ENCODE measurements at regions of chr21 and their contacts with region 1.

Region 1: DNA sequence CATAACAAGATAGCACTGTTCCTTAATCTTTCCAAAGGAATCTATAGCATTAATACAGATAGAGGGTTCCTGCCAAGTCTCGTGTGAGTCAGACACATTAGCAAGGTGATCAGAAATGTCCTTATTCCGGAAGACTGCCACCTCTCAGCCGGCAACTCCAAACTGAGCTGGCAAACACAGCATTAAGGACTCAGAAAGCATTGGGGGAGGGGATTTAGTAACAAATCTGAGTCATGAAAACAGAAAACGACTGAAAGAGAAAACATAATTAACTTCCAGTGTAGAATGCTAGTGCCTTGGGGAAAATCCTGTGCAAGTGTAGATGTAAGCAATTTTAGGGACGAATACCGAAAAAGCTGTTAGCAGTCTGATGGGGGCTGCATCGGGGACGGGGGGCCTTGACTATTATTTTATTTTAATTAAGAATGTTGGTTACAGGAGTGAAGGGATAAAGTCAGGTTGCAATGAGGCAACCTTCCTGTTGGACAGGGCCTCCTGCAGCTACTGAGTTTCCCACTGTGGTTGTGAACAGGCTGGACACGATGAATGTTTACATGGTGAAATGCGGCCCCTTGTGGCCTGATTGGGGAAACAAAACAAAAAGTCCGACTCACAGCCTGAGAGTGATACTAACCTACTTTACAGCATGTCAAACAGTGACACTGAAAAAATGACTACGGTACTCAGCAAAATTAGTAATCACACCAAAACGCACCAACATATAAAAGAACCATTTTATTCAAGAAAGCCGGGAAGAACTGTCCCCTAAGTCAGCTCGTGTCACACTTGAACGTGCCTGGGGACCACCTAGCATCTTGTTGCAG is 20.7 kb downstream of the MIS18A start:
- DNase-seq: peak; percentile 15
- H3K4me3 Mint-ChIP-seq: no peak overlapping the region
- H3K27ac Mint-ChIP-seq: no peak overlapping the region
- H3K4me1 Mint-ChIP-seq: no peaks in the 10 kb centered on the region
- H3K27me3 Mint-ChIP-seq: peaks cover 7% of the 10 kb centered on the region

Region 2: DNA sequence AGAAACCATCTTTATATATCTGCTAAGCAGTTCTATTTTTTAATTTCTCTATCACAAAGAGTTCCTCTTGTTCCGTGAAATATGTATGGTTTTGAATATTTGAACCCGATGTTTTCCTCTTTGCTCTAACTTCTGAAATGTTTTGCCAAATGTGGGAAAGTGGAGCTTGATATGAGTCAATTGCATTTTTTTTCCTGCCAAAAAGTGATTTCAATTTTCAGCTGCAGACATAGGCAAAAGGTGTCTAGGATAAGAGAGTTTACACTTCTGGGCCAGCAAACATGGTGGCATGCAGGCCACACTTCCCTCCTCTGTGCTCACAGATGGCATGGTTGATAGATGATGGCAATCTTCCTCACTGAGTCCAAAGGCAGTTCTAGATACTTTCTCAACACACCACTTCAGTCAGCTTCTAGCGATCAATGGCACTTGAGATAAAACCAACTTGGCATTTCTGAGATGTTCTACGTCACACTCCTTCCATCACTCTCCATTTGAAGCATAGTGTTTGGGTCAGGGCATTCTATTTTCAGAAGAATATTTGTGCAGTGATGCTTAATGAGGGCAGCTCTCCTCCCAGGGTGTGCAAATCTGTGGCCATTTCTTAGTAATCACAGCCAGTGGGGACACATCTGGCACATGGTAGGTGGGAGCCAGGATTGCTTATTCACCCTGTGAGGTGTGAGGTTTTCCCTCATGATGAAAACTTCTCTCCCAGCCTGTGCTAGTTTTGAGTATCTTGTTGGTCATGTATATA is 471.8 kb before region 1 on chr21:
- intact Hi-C with region 1: loop called (anchors 1 kb)
- DNase-seq: no peak
- H3K4me3 Mint-ChIP-seq: no peak overlapping the region
- H3K27ac Mint-ChIP-seq: no peak overlapping the region
- H3K4me1 Mint-ChIP-seq: no peaks in the 10 kb centered on the region
- H3K27me3 Mint-ChIP-seq: no peaks in the 10 kb centered on the region

Region 3: GRCh38 chr21:31866077-31866511 is 392.1 kb before region 1 on chr21:
- intact Hi-C with region 1: loop called (anchors 1 kb)
- DNase-seq: peak; percentile 37
- H3K4me3 Mint-ChIP-seq: no peak overlapping the region
- H3K27ac Mint-ChIP-seq: no peak overlapping the region
- H3K4me1 Mint-ChIP-seq: no peaks in the 10 kb centered on the region
- H3K27me3 Mint-ChIP-seq: peaks cover 19% of the 10 kb centered on the region

Region 4: GRCh38 chr21:32007456-32007855 is 250.7 kb before region 1 on chr21:
- intact Hi-C with region 1: no loop called
- DNase-seq: no peak
- H3K4me3 Mint-ChIP-seq: no peak overlapping the region
- H3K27ac Mint-ChIP-seq: no peak overlapping the region
- H3K4me1 Mint-ChIP-seq: no peaks in the 10 kb centered on the region
- H3K27me3 Mint-ChIP-seq: no peaks in the 10 kb centered on the region

Region 5: GRCh38 chr21:32096411-32096810 is 161.8 kb before region 1 on chr21:
- intact Hi-C with region 1: loop called (anchors 5 kb)
- DNase-seq: no peak
- H3K4me3 Mint-ChIP-seq: no peak overlapping the region
- H3K27ac Mint-ChIP-seq: no peak overlapping the region
- H3K4me1 Mint-ChIP-seq: no peaks in the 10 kb centered on the region
- H3K27me3 Mint-ChIP-seq: no peaks in the 10 kb centered on the region

Region 6: GRCh38 chr21:32114419-32115035 is 143.6 kb before region 1 on chr21:
- intact Hi-C with region 1: no loop called
- DNase-seq: no peak
- H3K4me3 Mint-ChIP-seq: no peak overlapping the region
- H3K27ac Mint-ChIP-seq: no peak overlapping the region
- H3K4me1 Mint-ChIP-seq: no peaks in the 10 kb centered on the region
- H3K27me3 Mint-ChIP-seq: no peaks in the 10 kb centered on the region

Measured in activated T-helper 1 cell treated with anti-CD3 and anti-CD28 coated beads, Interleukin-12 subunit alpha, Interleukin-12 subunit beta, Interleukin-2, Interleukin-4 antibody, amounts not matched to agents 30 ng/mL and 10 ng/mL and 1 ng/mL, durations not matched to agents 14 hours and 24 hours and 36 hours (primary cell).